ENCODE measurements at regions of chrX and their contacts with region 1.

Region 1: DNA sequence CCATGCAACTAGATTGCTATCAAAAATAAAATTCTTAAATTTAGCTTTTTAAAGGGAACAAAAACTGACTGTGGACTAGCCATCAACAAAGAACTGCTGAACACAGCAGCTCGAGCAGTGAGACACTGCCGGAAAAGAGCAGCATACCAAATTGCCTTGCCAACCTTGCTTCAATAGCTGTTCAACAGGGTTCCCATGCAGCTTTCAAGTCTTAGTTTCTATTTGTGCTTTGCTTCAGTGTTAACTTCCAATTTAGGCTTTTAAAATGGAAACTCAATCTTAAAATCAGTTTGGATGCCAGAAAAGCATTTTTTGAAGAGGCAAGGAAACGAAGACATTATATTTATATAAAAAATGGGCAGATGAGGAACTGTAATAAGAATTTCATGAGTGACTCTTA is 463.4 kb upstream of the MAGEB18 start:
- DNase-seq: no peak
- ATAC-seq: no peak
- H3K4me3 ChIP-seq: no peak overlapping the region
- H3K4me3 Mint-ChIP-seq: no peak overlapping the region
- H3K27ac ChIP-seq: no peak overlapping the region
- H3K27ac Mint-ChIP-seq: no peak overlapping the region
- H3K4me1 ChIP-seq: no peaks in the 10 kb centered on the region
- H3K4me1 Mint-ChIP-seq: no peaks in the 10 kb centered on the region
- H3K27me3 ChIP-seq: no peaks in the 10 kb centered on the region
- H3K27me3 Mint-ChIP-seq: no peaks in the 10 kb centered on the region
- CTCF ChIP-seq: no peak

Region 2: DNA sequence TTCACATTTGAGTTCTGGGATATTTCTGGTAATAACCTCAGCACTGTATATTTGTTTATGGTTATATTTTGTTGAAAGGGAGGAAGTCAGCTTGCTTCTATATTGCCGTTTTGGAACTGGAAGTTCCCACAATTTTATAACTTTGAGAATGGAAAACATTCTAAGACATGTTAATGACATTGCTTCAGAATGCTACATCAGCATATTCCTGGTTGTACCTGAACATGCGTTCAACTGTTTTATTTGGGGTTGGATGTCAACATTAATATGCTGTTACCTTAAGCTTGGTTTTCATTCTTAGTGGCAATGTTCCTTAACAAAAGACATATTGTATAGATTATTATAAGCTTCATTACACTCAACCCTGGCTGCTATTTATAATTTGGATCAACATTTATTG is 26.0 kb before region 1 on chrX:
- CTCF ChIA-PET with region 1: no interaction called
- POLR2A ChIA-PET with region 1: no interaction called
- intact Hi-C with region 1: loop called in 1 of 2 experiments (anchors 1 kb)
- DNase-seq: no peak
- ATAC-seq: no peak
- H3K4me3 ChIP-seq: no peak overlapping the region
- H3K4me3 Mint-ChIP-seq: no peak overlapping the region
- H3K27ac ChIP-seq: no peak overlapping the region
- H3K27ac Mint-ChIP-seq: no peak overlapping the region
- H3K4me1 ChIP-seq: no peaks in the 10 kb centered on the region
- H3K4me1 Mint-ChIP-seq: no peaks in the 10 kb centered on the region
- H3K27me3 ChIP-seq: no peaks in the 10 kb centered on the region
- H3K27me3 Mint-ChIP-seq: no peaks in the 10 kb centered on the region
- CTCF ChIP-seq: no peak

Measured in CD8-positive, alpha-beta T cell (primary cell).